ENCODE measurements at regions of chr11 and their contacts with region 1.

Region 1: GRCh38 chr11:69122642-69123431 is 32.9 kb upstream of the SMIM38 start:
- DNase-seq: peak; percentile 100
- ATAC-seq: peak; percentile 94
- H3K4me3 ChIP-seq: peak overlapping the region; percentile 41
- H3K27ac ChIP-seq: peak overlapping the region; percentile 97
- H3K4me1 ChIP-seq: peaks cover 32% of the 10 kb centered on the region
- H3K27me3 ChIP-seq: no peaks in the 10 kb centered on the region
- CTCF ChIP-seq: no peak

Region 2: DNA sequence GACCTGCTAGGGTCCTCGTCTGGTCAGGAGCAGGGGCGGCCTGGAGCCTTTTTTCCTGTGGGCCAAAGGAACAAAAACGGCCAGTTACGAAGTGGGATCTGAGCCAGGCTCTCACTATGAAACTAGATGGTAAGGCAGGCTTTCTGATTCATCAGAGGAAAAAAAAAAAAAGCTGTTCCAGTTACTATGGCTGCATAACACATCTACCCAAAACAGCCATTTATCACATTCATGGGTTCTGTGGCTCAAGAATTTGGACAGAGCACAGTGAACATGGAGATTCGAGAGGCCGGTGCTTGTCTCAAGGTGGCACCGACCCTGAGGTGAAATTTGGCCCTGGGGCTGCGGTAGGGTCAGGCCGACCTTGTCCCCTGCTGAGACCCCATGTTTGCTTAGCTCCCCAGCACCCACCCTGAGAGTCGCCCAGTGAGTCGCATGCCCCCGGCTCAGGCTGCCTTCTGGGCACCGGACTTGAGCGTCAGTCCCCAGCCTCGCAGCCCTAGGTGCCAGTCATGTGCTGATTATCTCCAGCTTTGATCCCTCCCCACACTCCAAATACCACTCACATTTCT is 176.3 kb before region 1 on chr11:
- CTCF ChIA-PET with region 1: no interaction called
- POLR2A ChIA-PET with region 1: no interaction called
- intact Hi-C with region 1: no loop called
- DNase-seq: peak; percentile 12
- ATAC-seq: no peak
- H3K4me3 ChIP-seq: no peak overlapping the region
- H3K27ac ChIP-seq: no peak overlapping the region
- H3K4me1 ChIP-seq: no peaks in the 10 kb centered on the region
- H3K27me3 ChIP-seq: no peaks in the 10 kb centered on the region
- CTCF ChIP-seq: no peak

Region 3: DNA sequence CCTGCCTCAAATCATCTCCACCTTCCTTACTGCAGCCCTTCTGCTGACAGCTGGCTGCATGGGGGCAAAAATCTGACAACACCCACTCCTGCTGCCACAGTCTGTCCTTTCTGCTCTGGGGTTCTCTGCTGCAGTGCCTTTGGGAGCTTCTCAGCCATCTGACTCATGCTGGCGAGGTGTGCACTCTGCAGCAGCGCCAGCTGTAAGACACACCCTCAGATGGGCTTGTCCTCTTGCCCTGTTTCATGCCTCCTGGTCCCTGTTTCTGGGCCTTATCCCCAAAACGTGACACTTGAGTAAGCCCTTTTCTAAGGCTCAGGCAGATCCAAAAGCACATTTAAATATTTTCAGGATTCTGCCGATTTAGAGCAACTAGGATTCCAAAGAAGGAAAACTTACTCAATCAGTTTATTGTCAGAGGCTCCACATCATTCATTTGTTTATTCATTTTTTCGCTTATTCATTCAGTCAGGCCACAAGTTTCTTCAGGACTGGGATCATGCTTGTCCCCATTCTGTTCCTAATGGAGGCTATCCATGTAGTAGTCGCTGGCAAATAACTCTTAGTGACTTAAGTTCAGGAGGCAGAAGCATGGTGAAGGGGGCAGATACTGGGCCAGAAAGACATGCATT is 93.1 kb after region 1 on chr11:
- CTCF ChIA-PET with region 1: no interaction called
- POLR2A ChIA-PET with region 1: no interaction called
- intact Hi-C with region 1: loop called (anchors 5 kb)
- DNase-seq: peak; percentile 65
- ATAC-seq: peak; percentile 97
- H3K4me3 ChIP-seq: no peak overlapping the region
- H3K27ac ChIP-seq: peak overlapping the region; percentile 3
- H3K4me1 ChIP-seq: peaks cover 12% of the 10 kb centered on the region
- H3K27me3 ChIP-seq: peaks cover 3% of the 10 kb centered on the region; the same call in 1 of the 2 replicates
- CTCF ChIP-seq: no peak

Measured in PC-3 (cell line).